ENCODE measurements at regions of chr13 and their contacts with region 1.

Region 1: DNA sequence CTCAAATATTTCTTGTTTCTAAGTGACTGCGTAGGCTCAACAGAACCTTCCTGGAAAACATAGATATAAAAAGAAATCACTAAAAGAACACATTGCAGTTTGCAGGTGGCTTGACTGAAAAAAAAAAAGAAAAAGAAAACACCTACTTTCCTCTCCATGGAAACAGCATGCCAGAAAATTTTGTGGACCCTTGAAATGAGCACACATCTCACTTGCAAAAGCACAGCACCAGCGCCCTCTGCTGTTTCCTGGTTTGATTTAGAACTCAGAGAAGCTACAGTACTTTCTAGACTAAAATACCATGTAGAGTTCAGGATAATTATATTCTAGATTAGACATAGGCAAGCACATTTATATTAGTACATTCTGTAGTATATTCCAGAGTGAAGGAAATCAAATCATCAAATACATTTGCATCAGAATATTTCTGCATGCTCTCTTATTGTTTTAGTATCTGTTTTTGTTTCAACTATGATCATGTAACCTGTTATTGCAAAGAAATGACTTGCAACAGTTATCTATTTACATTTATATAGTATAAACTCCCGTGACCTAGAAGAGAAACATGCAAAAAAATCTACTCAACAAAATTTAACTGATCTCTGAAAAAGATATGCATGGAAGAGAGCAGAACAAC is 22.3 kb upstream of the XPO4 start:
- DNase-seq: peak; percentile 48
- H3K4me3 Mint-ChIP-seq: no peak overlapping the region
- H3K27ac Mint-ChIP-seq: no peak overlapping the region
- H3K4me1 Mint-ChIP-seq: no peaks in the 10 kb centered on the region
- H3K27me3 Mint-ChIP-seq: peaks cover 2% of the 10 kb centered on the region

Region 2: GRCh38 chr13:20182231-20182846 is 742.5 kb before region 1 on chr13:
- intact Hi-C with region 1: loop called (anchors 1 kb)
- DNase-seq: no peak
- H3K4me3 Mint-ChIP-seq: no peak overlapping the region
- H3K27ac Mint-ChIP-seq: no peak overlapping the region
- H3K4me1 Mint-ChIP-seq: no peaks in the 10 kb centered on the region
- H3K27me3 Mint-ChIP-seq: peaks cover 25% of the 10 kb centered on the region

Region 3: GRCh38 chr13:20320885-20321284 is 604.0 kb before region 1 on chr13:
- intact Hi-C with region 1: no loop called
- DNase-seq: no peak
- H3K4me3 Mint-ChIP-seq: no peak overlapping the region
- H3K27ac Mint-ChIP-seq: no peak overlapping the region
- H3K4me1 Mint-ChIP-seq: no peaks in the 10 kb centered on the region
- H3K27me3 Mint-ChIP-seq: peaks cover 7% of the 10 kb centered on the region

Region 4: GRCh38 chr13:20711301-20712044 is 213.4 kb before region 1 on chr13:
- intact Hi-C with region 1: loop called (anchors 1 kb)
- DNase-seq: no peak
- H3K4me3 Mint-ChIP-seq: no peak overlapping the region
- H3K27ac Mint-ChIP-seq: no peak overlapping the region
- H3K4me1 Mint-ChIP-seq: peaks cover 19% of the 10 kb centered on the region
- H3K27me3 Mint-ChIP-seq: peaks cover 18% of the 10 kb centered on the region

Region 5: GRCh38 chr13:20902438-20903163 is 22.3 kb before region 1 on chr13 and contains the start of gene XPO4:
- intact Hi-C with region 1: no loop called
- DNase-seq: peak; percentile 80
- H3K4me3 Mint-ChIP-seq: peak within 1 kb of the TSS; percentile 99
- H3K27ac Mint-ChIP-seq: peak within 1 kb of the TSS; percentile 94
- H3K4me1 Mint-ChIP-seq: peaks cover 32% of the 10 kb centered on the region
- H3K27me3 Mint-ChIP-seq: peaks cover 6% of the 10 kb centered on the region
- total RNA-seq, gene XPO4: 33.5 and 34.1 TPM in 2 replicates

Measured in activated T-helper 1 cell treated with anti-CD3 and anti-CD28 coated beads, Interleukin-12 subunit alpha, Interleukin-12 subunit beta, Interleukin-2, Interleukin-4 antibody, amounts not matched to agents 30 ng/mL and 10 ng/mL and 1 ng/mL, durations not matched to agents 14 hours and 24 hours and 36 hours (primary cell).